ENCODE measurements at regions of chr2 and their contacts with region 1.

Region 1: DNA sequence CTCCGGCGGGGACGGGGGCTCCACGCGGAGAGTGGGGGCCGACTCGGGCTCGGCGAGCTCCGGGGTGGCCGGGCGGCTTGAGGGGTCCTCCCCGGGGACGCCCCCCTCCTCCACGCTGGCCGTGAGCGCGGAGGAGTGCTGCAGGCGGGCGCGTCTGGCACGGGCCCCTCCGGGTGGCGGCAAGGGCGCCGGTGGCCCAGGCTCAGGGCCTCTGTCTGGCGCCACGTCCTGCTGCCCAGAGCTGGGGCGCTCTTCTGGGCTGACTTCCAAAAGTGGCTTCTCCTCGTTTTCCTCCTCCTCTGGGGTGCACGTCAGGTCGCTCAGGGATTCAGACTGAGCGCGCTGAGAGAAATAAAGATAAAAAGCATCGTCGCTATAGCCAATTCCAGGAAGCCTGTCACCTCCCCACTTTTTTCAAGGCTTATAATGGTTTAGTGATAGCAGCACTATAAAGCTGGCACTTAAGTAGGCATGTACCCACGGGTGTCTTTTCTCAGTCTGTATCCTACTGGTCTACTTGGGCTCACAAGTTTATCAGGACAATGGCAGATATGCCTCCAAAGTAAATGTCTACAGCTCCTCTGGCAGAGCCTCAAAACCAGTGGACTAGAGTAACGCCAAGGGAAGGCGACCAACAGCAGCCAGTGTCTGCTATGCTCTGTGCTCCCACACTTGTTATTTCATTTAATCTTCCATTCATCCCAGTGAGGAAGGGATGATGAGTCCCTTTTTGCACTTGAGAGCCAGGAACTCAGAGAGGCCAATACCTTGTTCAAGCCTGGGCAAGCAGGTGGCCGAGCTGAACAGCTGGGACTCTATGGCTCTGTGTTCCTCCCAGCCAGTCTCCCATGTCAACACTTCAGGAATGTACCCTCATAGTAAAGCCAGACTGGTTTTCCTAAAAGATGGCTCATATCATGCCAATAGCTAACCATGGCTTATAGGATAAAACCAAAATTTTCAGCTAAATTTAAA is 92.6 kb upstream of the MGAT4A start:
- DNase-seq: no peak

Region 2: GRCh38 chr2:98731041-98731893 is 92.2 kb before region 1 on chr2 and contains the start of gene MGAT4A:
- intact Hi-C with region 1: loop called (anchors 2 kb)
- DNase-seq: peak; percentile 90
- total RNA-seq, gene MGAT4A: 16.3 TPM

Region 3: DNA sequence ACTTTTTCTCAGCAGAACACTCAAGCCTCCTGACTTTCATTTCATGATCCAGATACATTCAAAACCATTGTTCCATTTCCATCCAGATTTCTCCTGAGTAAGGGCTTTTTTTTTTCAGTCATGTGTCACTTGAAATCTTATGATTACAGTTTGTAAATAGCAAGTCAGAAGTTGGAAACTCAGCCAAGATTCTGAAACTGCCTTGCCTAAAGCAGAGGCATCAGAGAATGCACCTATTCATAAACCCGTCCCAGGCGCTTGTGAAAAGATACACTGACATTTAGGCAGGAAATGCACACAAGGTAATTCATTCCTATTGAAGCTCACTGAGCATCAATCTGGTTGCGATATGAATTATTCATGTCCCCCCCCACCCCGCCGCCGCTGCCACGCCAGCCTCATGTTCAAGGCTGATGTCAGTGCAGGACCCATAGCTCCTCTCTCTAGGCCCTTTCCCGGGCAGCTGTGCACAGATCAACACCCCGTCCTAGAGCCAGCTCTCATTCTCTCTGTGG is 62.2 kb before region 1 on chr2:
- intact Hi-C with region 1: loop called (anchors 5 kb)
- DNase-seq: no peak

Region 4: DNA sequence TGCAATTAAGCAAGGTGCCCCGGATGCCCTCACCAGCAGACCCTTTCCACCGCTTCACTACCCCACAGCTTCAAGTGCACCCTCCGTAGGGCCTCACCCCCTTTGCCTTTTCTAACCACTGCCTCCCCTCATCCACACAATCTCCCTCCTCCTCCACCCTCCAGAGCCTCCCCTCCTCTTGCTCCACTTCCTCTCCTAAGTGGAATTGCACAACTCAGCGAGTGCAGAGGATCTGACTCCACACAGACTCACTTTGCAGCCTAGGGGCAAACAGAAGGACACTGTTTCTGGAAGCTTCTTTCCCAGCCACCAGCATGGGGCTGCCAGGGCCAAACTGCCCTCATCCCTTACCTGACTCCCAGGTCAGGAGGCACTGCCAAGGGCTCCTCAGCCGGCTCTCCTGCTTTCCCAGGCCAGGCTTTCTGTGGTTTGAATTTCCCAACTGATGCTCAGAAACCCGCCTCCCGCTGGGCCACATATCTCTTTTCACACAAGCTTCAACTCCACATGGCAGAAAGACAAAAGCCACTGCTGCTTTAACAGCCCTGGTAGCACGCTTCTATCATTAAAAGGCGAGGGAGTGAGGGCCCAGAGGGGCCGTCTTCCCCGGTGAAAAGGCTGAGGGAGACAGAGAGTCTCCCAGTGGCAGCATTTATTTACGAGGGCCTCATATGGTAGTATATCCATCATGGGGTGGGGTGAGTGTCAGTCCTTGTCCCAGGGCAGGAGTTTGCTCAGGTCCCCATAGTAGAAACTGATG is 17.9 kb before region 1 on chr2:
- intact Hi-C with region 1: loop called (anchors 1 kb)
- DNase-seq: no peak